ENCODE measurements at regions of chr10 and their contacts with region 1.

Region 1: DNA sequence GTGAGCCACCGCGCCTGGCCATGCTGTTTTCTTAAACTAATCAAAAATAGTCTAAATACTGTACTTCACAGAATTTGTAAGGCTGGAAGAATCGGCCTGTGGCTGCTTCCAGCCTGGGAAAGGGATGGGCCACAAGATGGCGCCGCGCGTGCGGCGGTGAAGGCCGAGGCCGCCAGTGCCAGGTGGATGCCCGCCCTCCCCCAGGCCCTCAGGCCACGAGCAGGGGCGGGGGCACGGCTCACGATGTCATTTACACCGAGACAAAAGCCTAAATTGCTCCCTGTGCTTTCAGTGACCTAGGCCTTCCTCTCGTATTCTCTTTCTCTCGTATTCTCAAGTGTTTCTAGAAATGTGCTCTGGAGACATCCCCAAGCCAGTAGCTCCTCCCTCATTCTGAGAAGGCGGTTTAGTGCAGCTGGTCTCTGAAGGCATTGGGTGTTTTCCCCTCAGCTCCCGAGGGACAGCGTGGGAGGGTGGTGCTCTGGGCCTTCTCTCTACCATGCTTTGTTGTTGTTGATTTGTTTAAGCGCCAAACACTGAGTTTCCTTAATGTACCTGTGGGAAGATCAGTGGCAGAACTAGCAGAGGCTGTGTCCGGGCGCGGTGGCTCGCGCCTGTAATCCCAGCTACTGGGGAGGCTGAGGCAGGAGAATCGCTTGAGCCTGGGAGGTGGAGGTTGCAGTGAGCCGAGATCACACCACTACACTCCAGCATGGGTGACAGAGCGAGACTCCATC is 68.4 kb downstream of the CDC123 start:
- DNase-seq: peak; percentile 69 to 87 (median 78)
- H3K4me3 ChIP-seq: no peak overlapping the region
- H3K27ac ChIP-seq: no peak overlapping the region
- H3K4me1 ChIP-seq: no peaks in the 10 kb centered on the region
- H3K27me3 ChIP-seq: no peaks in the 10 kb centered on the region
- CTCF ChIP-seq: peak; percentile 74 to 84 (median 77)
- EP300 ChIP-seq: no peak
- POLR2A ChIP-seq: no peak

Region 2: GRCh38 chr10:12656518-12657142 is 392.3 kb after region 1 on chr10:
- intact Hi-C with region 1: loop called in 3 of 4 experiments (anchors 2 to 10 kb)
- DNase-seq: no peak
- H3K4me3 ChIP-seq: no peak overlapping the region
- H3K27ac ChIP-seq: no peak overlapping the region
- H3K4me1 ChIP-seq: no peaks in the 10 kb centered on the region
- H3K27me3 ChIP-seq: no peaks in the 10 kb centered on the region
- CTCF ChIP-seq: peak in 2 of 3 donors; percentile 31 to 56
- EP300 ChIP-seq: no peak
- POLR2A ChIP-seq: no peak

Region 3: GRCh38 chr10:13099666-13100348 is 835.4 kb after region 1 on chr10 and contains the start of gene OPTN:
- intact Hi-C with region 1: loop called in 1 of 4 experiments (anchors 10 kb)
- DNase-seq: peak; percentile 80 to 90 (median 84)
- H3K4me3 ChIP-seq: peak within 1 kb of the TSS; percentile 98
- H3K27ac ChIP-seq: peak within 1 kb of the TSS; percentile 76 to 96
- H3K4me1 ChIP-seq: peaks cover 12% of the 10 kb centered on the region
- H3K27me3 ChIP-seq: no peaks in the 10 kb centered on the region
- CTCF ChIP-seq: peak in 2 of 3 donors; percentile 63 to 75
- EP300 ChIP-seq: no peak
- POLR2A ChIP-seq: peak; percentile 39
- total RNA-seq, gene OPTN: 42.9 to 133 (median 96.2) TPM

Measured in ovary (tissue), 10 donors.